ENCODE measurements at regions of chr2 and their contacts with region 1.

Region 1: DNA sequence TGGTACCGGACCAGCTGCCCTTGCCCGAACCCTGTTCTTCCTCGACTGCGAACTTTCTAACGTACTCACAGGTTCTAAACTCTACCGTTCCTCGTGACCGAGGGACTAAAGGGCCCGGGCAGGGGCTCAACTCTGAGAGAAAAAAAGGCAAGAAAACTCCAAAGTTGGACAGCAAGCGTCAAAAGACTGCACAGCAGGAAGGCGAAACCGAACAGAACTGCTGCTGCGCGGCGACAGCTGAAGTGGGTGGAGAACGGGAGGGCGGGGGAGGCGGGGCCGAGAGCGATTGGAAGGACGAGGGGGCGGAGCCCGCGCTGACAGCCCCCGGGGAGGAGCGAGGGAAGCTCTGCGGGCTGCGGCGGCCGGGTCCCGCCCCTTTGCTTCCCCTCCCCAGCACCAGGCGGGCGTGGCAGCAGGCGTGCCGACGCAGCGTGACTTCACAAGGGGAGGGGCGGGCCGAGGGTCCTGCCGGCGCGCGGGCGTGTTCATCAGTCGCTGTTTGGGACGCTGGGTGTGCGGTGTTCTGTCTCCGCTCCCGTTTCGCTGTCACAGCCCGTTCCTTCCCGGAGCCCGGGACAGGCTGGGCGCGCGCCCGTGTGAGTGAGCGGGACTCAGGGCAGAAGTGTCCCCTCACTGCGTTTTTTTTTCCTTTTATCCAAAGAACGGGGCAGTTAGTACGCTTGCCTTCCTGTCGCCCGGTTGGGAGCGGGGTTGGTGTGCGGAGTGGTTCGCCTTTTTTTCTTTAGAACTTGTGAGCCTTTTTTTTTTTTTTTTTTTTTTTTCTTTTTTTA is at the start of gene NABP1:
- DNase-seq: peak; percentile 98 to 99 (median 98)
- ATAC-seq: peak; percentile 95
- H3K4me3 ChIP-seq: peak within 1 kb of the TSS; percentile 90
- H3K4me3 Mint-ChIP-seq: peak within 1 kb of the TSS; percentile 87 to 99 (median 96)
- H3K27ac ChIP-seq: peak within 1 kb of the TSS; percentile 92
- H3K27ac Mint-ChIP-seq: peak within 1 kb of the TSS; percentile 97 to 100 (median 99)
- H3K4me1 ChIP-seq: peaks cover 49 to 51% of the 10 kb centered on the region in 2 donors
- H3K4me1 Mint-ChIP-seq: peaks cover 30 to 74% (median 63%) of the 10 kb centered on the region in 7 donors
- H3K27me3 ChIP-seq: no peaks in the 10 kb centered on the region
- H3K27me3 Mint-ChIP-seq: peaks cover 0 to 2% (median 0%) of the 10 kb centered on the region in 5 donors
- total RNA-seq, gene NABP1: 24.5 to 79.5 (median 55.4) TPM

Region 2: GRCh38 chr2:189674374-189675112 is 2003.3 kb before region 1 on chr2 and contains the start of gene ANKAR:
- CTCF ChIA-PET with region 1: no interaction called
- POLR2A ChIA-PET with region 1: no interaction called
- intact Hi-C with region 1: loop called in 1 of 2 experiments (anchors 10 kb)
- DNase-seq: peak; percentile 71 to 88 (median 84)
- ATAC-seq: peak; percentile 98
- H3K4me3 ChIP-seq: peak within 1 kb of the TSS; percentile 62
- H3K4me3 Mint-ChIP-seq: peak within 1 kb of the TSS; percentile 88 to 96 (median 95)
- H3K27ac ChIP-seq: peak within 1 kb of the TSS; percentile 86
- H3K27ac Mint-ChIP-seq: peak within 1 kb of the TSS; percentile 96 to 99 (median 97)
- H3K4me1 ChIP-seq: peaks cover 9 to 12% of the 10 kb centered on the region in 2 donors
- H3K4me1 Mint-ChIP-seq: peaks cover 17 to 49% (median 40%) of the 10 kb centered on the region in 7 donors
- H3K27me3 ChIP-seq: no peaks in the 10 kb centered on the region
- H3K27me3 Mint-ChIP-seq: no peaks in the 10 kb centered on the region
- total RNA-seq, gene ANKAR: 4.3 to 17.9 (median 10.3) TPM

Region 3: DNA sequence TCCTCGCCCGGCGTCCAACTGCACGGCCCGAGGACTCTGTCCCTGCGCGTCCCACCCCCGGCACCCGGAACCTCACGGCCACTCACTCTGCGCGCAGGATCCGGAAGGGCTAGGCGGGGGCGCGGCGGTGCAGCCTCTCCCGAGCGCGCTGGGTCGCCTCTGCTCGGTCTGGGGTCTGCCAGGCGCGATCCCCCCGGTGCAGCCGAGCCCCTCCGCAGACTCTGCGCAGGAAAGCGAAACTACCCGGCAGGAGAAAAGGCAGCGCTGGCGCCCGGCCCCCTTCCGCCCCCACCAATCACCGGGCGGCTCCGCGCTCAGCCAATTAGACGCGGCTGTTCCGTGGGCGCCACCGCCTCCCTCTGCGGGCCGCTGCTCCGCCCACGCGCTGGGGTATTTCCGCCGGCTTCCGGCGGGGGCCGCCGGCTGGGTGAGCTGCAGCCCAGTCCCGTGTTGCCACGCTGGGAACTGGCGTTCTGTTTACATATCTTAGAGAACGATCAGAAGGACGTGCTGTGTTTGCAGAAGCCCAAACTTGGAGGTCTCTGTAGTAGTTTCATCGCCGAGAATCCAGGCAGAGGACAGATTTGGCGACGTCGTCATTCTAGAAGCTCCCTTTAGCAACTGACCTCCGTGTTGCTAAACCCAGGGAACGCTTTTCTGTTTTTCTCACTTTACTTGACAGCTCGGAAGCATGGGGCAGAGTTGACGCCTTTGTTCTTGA is 663.7 kb before region 1 on chr2 and contains the start of gene STAT1:
- CTCF ChIA-PET with region 1: no interaction called
- POLR2A ChIA-PET with region 1: interaction called, 3 read pairs
- intact Hi-C with region 1: loop called in 1 of 2 experiments (anchors 1 kb)
- DNase-seq: peak; percentile 93 to 99 (median 97)
- ATAC-seq: peak; percentile 97
- H3K4me3 ChIP-seq: peak within 1 kb of the TSS; percentile 69
- H3K4me3 Mint-ChIP-seq: no peak within 1 kb of the TSS
- H3K27ac ChIP-seq: peak within 1 kb of the TSS; percentile 87
- H3K27ac Mint-ChIP-seq: no peak within 1 kb of the TSS
- H3K4me1 ChIP-seq: peaks cover 41 to 48% of the 10 kb centered on the region in 2 donors
- H3K4me1 Mint-ChIP-seq: peaks cover 23 to 51% (median 42%) of the 10 kb centered on the region in 7 donors
- H3K27me3 ChIP-seq: no peaks in the 10 kb centered on the region
- H3K27me3 Mint-ChIP-seq: no peaks in the 10 kb centered on the region
- total RNA-seq, gene STAT1: 74.1 to 1,177 (median 89.6) TPM

Region 4: DNA sequence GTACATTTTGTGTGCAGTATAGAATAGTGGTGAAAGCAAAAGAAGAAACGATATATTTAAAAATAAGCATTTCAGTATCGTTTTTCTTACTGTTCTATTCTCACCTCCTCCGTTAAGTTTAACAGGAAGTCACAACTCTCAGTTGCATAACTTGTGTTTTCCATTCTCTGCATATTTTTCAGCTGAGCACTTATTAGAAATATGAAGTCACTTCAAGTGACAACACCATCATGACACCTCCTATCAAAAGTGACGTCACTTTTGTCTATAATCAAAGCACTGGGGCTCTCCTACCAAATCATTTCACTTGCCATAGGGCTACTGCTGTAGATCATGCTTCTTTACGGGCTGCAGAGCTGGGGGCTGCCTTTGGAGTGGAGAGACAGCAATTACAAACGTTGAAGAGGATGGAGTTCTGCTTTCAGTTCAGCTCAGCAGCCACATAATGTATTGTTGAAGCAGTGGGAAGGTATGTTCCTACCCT is 563.4 kb before region 1 on chr2:
- CTCF ChIA-PET with region 1: no interaction called
- POLR2A ChIA-PET with region 1: no interaction called
- intact Hi-C with region 1: loop called in 1 of 2 experiments (anchors 1 kb)
- DNase-seq: peak in 8 of 9 donors; percentile 30 to 70 (median 42)
- ATAC-seq: peak; percentile 70
- H3K4me3 ChIP-seq: no peak overlapping the region
- H3K4me3 Mint-ChIP-seq: peak overlapping the region; percentile 56 to 83 (median 65)
- H3K27ac ChIP-seq: peak overlapping the region; percentile 26
- H3K27ac Mint-ChIP-seq: peak overlapping the region; percentile 67 to 95 (median 88)
- H3K4me1 ChIP-seq: peaks cover 22 to 53% of the 10 kb centered on the region in 2 donors
- H3K4me1 Mint-ChIP-seq: peaks cover 39 to 90% (median 80%) of the 10 kb centered on the region in 7 donors
- H3K27me3 ChIP-seq: no peaks in the 10 kb centered on the region
- H3K27me3 Mint-ChIP-seq: no peaks in the 10 kb centered on the region

Region 5: DNA sequence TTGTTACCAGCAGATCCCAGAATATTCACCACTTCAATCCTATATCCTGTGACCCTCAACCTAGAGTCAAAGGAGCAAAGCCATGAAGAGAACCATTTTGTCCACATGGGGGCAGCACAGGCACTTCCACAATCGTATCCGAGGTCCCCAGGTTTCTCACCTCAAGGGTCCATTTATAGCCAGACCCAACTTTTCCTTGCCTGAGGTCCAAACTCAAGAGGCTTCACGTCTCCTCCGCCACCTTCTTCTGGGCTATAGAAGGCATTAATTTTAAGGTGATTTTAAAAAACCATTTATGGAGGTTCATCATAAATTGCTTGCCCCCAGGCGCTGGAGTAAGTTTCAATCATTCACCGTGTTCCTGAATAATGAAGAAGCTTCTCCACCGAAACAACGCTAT is 111.5 kb before region 1 on chr2:
- CTCF ChIA-PET with region 1: interaction called, 4 read pairs
- POLR2A ChIA-PET with region 1: interaction called, 12 read pairs
- intact Hi-C with region 1: loop called (anchors 1 kb)
- DNase-seq: peak; percentile 16 to 64 (median 42)
- ATAC-seq: peak; percentile 72
- H3K4me3 ChIP-seq: no peak overlapping the region
- H3K4me3 Mint-ChIP-seq: no peak overlapping the region
- H3K27ac ChIP-seq: no peak overlapping the region
- H3K27ac Mint-ChIP-seq: no peak overlapping the region
- H3K4me1 ChIP-seq: peaks cover 8 to 14% of the 10 kb centered on the region in 2 donors
- H3K4me1 Mint-ChIP-seq: peaks cover 14 to 34% (median 22%) of the 10 kb centered on the region in 7 donors
- H3K27me3 ChIP-seq: peaks cover 0 to 7% of the 10 kb centered on the region in 2 donors
- H3K27me3 Mint-ChIP-seq: peaks cover 4 to 69% (median 13%) of the 10 kb centered on the region in 5 donors

Region 6: DNA sequence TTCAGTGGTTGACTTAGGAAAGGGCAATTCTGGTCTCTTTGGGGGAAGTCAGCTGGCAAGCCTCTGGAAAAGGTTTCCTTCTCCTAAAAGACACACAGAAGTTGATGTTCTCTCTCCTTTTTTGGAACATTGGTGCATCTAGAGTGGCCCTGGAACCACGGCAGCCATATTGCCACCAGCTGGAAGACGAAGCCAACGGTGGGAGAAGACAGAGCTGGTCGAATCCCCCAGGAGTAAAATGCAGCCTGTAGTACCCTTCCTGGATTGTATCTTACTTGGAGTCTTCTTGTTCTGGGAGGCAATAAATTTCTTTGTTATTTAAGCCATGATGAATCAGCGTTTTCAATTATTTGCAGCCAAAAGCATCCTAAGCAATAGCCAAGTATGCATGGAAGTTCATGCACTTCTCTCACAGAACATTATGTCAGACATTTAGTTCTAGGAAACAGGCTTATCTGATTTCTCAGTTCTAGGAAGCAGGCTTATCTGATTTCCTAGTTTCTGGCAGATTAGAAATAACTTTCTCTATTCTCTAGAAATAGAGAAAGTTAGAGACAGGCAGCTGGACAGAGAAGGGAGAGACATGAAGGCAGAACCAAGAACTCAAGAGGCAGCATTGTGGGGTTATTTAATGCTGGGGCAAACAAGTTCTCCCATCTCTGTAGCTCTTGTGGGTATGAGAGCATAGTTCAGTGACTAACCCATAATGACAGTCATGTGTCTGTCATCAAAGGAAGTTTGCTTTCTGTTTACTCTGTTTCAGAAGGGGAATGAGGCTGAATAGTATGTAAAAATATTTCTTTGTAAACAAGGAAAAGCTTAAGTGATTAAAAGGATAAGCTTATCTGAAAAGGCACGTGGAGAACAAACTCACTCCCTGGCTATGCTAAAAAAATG is 40.4 kb before region 1 on chr2:
- CTCF ChIA-PET with region 1: interaction called, 5 read pairs
- POLR2A ChIA-PET with region 1: interaction called, 42 read pairs
- intact Hi-C with region 1: loop called (anchors 1 kb)
- DNase-seq: peak in 7 of 9 donors; percentile 17 to 39 (median 31)
- ATAC-seq: peak; percentile 94
- H3K4me3 ChIP-seq: no peak overlapping the region
- H3K4me3 Mint-ChIP-seq: peak overlapping the region; percentile 29 to 78 (median 68)
- H3K27ac ChIP-seq: peak overlapping the region; percentile 43
- H3K27ac Mint-ChIP-seq: peak overlapping the region; percentile 44 to 96 (median 80)
- H3K4me1 ChIP-seq: peaks cover 25 to 26% of the 10 kb centered on the region in 2 donors
- H3K4me1 Mint-ChIP-seq: peaks cover 38 to 60% (median 45%) of the 10 kb centered on the region in 7 donors
- H3K27me3 ChIP-seq: no peaks in the 10 kb centered on the region
- H3K27me3 Mint-ChIP-seq: peaks cover 0 to 5% (median 0%) of the 10 kb centered on the region in 5 donors

Region 7: GRCh38 chr2:191691016-191691735 is 13.3 kb after region 1 on chr2:
- CTCF ChIA-PET with region 1: interaction called, 3 read pairs
- POLR2A ChIA-PET with region 1: interaction called, 5 read pairs
- intact Hi-C with region 1: loop called (anchors 1 kb)
- DNase-seq: peak in 7 of 9 donors; percentile 44 to 69 (median 61)
- ATAC-seq: peak; percentile 93
- H3K4me3 ChIP-seq: no peak overlapping the region
- H3K4me3 Mint-ChIP-seq: no peak overlapping the region
- H3K27ac ChIP-seq: no peak overlapping the region
- H3K27ac Mint-ChIP-seq: peak overlapping the region in 5 of 9 donors; percentile 31 to 61 (median 44)
- H3K4me1 ChIP-seq: peaks cover 3 to 11% of the 10 kb centered on the region in 2 donors
- H3K4me1 Mint-ChIP-seq: peaks cover 8 to 28% (median 15%) of the 10 kb centered on the region in 7 donors
- H3K27me3 ChIP-seq: no peaks in the 10 kb centered on the region
- H3K27me3 Mint-ChIP-seq: no peaks in the 10 kb centered on the region